ENCODE measurements at regions of chr12 and their contacts with region 1.

Region 1: DNA sequence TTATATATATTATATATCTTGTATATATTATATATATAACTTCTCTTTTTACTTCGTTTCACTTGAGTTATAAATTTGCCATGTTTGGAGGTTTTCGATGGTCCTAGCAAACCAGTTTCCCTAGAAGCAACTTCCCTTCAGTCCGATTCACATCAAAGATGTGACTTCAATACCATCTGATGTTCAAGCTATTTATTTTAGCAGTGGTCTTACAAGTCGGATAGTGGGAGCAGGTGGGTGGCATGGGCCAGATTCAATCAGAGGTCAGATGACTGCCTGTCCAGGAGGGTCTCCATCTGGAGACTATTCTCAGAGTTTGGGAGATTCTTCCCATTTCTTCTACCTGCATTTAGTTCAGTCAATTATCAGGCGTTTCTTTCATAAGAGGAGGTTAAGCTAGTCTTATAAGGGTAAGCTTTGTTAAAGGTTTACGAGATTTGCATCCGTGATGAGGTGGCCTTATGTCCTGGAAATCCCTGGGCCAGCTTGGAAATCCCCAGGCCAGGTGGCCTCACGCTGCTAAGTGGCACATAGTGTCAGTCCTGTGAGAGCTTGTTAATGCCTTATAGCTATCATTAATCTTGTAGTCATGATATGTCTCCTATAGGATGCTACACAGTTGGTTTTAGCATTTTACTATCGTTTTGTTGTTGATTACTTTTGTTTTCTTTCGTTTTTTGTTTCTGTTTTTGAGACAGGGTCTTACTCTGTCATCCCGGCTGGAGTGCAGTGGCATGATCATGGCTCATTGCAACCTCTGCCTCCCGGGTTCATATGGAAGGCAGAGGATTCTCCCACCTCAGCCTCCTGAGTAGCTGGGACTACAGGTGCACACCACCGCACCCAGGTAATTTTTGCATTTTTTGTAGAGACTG is 145.8 kb downstream of the BICD1 start:
- DNase-seq: no peak
- ATAC-seq: peak; percentile 94
- H3K4me3 Mint-ChIP-seq: peak overlapping the region; percentile 77
- H3K27ac Mint-ChIP-seq: peak overlapping the region; percentile 87
- H3K4me1 Mint-ChIP-seq: peaks cover 26% of the 10 kb centered on the region
- H3K27me3 Mint-ChIP-seq: no peaks in the 10 kb centered on the region
- CTCF ChIP-seq: no peak

Region 2: DNA sequence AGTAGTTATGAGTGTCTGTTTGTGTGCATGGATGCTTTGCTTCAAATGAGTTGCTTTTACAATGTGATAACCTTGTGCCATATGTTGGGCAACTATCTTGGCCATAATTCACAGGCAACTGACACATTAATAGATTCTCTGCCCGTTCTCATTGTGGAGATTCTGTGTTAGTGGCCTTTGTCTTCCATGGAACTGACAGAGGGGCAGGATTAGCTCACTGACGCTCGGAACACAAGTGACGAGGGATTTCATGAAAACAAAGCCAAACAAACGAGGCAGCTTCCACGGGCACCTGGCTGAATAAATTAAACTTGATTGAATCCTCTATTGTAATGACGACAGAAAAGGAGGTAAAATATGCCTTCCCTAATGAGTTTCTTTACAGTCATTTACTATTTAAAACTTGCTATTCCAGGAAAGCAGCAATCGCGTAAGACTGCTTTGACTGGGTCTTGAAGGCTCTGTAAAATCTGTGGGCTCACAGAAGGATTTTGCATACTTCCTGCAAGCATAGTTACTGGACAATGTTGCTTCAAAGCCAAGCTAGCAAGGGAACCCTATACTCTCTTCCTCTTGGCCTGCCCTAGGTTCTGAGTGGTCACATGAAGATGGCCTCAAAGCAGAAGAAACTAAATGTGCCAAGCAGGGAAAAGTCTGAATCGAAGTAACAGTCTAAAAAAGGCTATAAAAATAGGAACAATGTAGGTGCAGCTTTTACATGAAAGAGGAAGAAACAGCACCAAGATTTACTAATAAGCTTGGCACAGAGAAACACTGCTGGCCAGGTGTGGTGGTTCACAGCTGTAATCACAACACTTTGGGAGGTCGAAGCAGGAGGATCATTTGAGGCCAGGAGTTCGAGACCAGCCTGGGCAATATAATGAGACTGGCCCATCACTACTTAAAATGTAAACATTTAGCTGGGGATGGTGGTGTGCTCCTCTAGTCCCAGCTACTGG is 898.4 kb before region 1 on chr12:
- CTCF ChIA-PET with region 1: no interaction called
- POLR2A ChIA-PET with region 1: no interaction called
- intact Hi-C with region 1: no loop called
- DNase-seq: no peak
- ATAC-seq: peak; percentile 31
- H3K4me3 Mint-ChIP-seq: no peak overlapping the region
- H3K27ac Mint-ChIP-seq: no peak overlapping the region
- H3K4me1 Mint-ChIP-seq: peaks cover 10% of the 10 kb centered on the region
- H3K27me3 Mint-ChIP-seq: no peaks in the 10 kb centered on the region
- CTCF ChIP-seq: no peak

Region 3: DNA sequence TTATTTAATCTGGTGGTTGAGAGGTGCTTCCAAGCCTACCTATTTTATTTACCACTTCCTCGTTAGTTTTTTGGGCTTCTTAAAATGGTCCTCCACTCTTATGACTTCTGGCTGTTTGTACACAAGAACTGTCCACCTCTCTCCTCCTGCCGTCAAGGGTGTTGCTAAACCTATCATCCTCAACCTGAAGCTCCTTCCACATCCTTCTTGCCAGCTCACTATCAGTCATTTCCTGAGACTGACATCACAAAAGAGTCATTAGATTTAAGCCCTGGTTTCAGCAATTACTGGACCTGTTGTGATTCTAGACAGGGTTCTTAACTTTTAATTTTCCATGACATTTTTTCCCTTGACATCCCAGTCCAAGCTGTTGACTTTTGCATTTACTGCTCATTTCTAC is 53.9 kb before region 1 on chr12:
- CTCF ChIA-PET with region 1: no interaction called
- POLR2A ChIA-PET with region 1: no interaction called
- intact Hi-C with region 1: no loop called
- DNase-seq: no peak
- ATAC-seq: no peak
- H3K4me3 Mint-ChIP-seq: no peak overlapping the region
- H3K27ac Mint-ChIP-seq: no peak overlapping the region
- H3K4me1 Mint-ChIP-seq: peaks cover 4% of the 10 kb centered on the region
- H3K27me3 Mint-ChIP-seq: no peaks in the 10 kb centered on the region
- CTCF ChIP-seq: no peak

Region 4: GRCh38 chr12:32235251-32235650 is 17.2 kb before region 1 on chr12:
- CTCF ChIA-PET with region 1: interaction called, 3 read pairs
- POLR2A ChIA-PET with region 1: interaction called, 3 read pairs
- intact Hi-C with region 1: loop called (anchors 2 kb)
- DNase-seq: no peak
- ATAC-seq: no peak
- H3K4me3 Mint-ChIP-seq: no peak overlapping the region
- H3K27ac Mint-ChIP-seq: no peak overlapping the region
- H3K4me1 Mint-ChIP-seq: no peaks in the 10 kb centered on the region
- H3K27me3 Mint-ChIP-seq: no peaks in the 10 kb centered on the region
- CTCF ChIP-seq: no peak

Region 5: DNA sequence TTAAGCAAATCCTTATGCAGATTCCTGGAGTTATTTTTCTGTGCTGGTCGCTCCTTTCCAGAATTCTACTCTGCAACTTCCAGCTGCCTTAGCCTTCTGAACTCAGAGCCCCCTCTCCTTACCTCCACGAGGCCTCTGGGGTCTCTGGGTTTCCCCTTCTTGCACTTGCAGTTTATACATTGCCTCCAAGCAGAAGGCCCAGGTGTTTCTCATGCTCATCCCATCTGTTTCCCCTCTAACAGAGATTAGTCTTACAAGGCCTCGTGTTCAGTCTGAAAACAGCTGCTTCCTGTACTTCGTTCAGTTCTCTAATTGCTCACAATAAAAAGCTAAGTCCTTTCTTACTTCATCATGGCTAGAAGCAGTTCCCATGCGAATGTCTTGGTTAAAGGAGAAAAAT is 12.5 kb after region 1 on chr12:
- CTCF ChIA-PET with region 1: interaction called, 4 read pairs
- POLR2A ChIA-PET with region 1: interaction called, 35 read pairs
- intact Hi-C with region 1: no loop called
- DNase-seq: peak; percentile 31
- ATAC-seq: peak; percentile 67
- H3K4me3 Mint-ChIP-seq: peak overlapping the region; percentile 52
- H3K27ac Mint-ChIP-seq: peak overlapping the region; percentile 97
- H3K4me1 Mint-ChIP-seq: peaks cover 43% of the 10 kb centered on the region
- H3K27me3 Mint-ChIP-seq: no peaks in the 10 kb centered on the region
- CTCF ChIP-seq: no peak

Region 6: DNA sequence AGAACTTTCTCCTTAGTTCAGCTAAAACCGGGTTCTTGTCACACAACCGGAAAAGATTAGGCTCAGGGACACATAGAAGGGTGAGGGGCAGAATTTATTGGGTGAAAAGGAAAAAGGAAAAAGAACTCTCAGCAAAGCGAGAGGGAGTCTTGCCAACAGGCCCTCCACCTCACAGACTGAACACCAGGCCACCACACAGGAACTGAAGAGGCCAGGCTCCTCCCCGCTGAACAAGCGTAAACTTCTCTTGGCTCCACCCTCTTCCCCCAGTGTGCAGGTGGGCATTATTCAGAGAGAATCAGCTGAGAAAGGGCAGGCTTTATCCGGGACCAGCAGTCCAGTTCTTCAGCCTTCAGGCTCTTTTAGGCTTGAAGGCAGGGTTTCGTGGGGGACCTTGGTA is 21.3 kb after region 1 on chr12:
- CTCF ChIA-PET with region 1: no interaction called
- POLR2A ChIA-PET with region 1: interaction called, 13 read pairs
- intact Hi-C with region 1: loop called (anchors 2 kb)
- DNase-seq: peak; percentile 47
- ATAC-seq: peak; percentile 96
- H3K4me3 Mint-ChIP-seq: peak overlapping the region; percentile 77
- H3K27ac Mint-ChIP-seq: peak overlapping the region; percentile 99
- H3K4me1 Mint-ChIP-seq: peaks cover 39% of the 10 kb centered on the region
- H3K27me3 Mint-ChIP-seq: no peaks in the 10 kb centered on the region
- CTCF ChIP-seq: no peak

Measured in activated B cell treated with CpG ODN at 0.5 μM for 24 hours (primary cell).